ENCODE measurements at regions of chr5 and their contacts with region 1.

Region 1: GRCh38 chr5:80255732-80256479 is at the start of gene SERINC5:
- DNase-seq: peak; percentile 60 to 71
- ATAC-seq: peak; percentile 79 to 81
- H3K4me3 ChIP-seq: peak within 1 kb of the TSS; percentile 76 to 95 (median 82)
- H3K27ac ChIP-seq: peak within 1 kb of the TSS; percentile 87 to 94 (median 91)
- H3K4me1 ChIP-seq: peaks cover 9 to 15% of the 10 kb centered on the region in 2 donors
- H3K27me3 ChIP-seq: no peaks in the 10 kb centered on the region
- CTCF ChIP-seq: no peak
- POLR2A ChIP-seq: peak; percentile 87
- total RNA-seq, gene SERINC5: 1.4 to 5.3 (median 3.0) TPM

Region 2: DNA sequence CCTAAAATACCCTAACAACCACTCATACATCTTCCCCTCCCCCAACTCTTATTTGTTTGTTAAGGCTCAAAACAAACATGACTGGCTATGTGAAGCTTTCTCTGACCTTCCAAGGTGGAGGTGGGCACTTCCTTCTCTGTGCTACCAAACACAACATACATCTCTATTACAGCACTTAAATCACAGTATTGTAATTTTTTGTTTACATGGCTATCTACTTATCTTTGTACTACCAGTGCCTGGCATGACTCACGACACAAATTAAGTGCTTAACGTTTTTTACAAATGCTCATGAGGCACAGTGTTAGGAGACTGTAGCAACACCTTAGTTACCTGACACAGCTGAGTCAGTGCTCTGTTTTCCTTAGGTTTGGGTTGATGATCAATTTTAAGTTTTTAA is 760.6 kb before region 1 on chr5:
- in situ Hi-C with region 1: no loop called
- intact Hi-C with region 1: loop called (anchors 10 kb)
- DNase-seq: no peak
- ATAC-seq: peak; percentile 32 to 49
- H3K4me3 ChIP-seq: no peak overlapping the region
- H3K27ac ChIP-seq: peak overlapping the region; percentile 47 to 74 (median 66)
- H3K4me1 ChIP-seq: peaks cover 42 to 53% of the 10 kb centered on the region in 2 donors
- H3K27me3 ChIP-seq: no peaks in the 10 kb centered on the region
- CTCF ChIP-seq: no peak
- POLR2A ChIP-seq: no peak

Region 3: DNA sequence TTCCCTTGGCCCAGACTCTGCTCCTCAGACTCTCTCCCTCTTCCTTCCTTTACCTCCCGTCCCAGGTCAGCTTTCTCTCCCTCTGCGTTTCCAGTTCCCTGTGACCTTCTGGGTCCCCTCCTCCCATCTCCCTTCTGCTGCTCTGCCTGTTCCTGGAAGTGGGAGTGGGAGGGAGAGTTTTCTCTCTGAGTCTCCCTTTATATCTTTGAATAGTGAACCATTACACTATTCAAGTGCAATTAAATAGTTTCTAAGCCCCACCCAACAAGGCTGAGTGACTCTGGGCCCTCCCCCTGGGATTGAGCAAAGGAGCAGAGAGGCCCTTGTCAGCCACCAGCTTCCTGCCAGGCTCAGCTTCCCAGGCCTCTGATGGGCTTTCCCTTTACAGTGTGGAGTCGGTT is 186.0 kb before region 1 on chr5:
- in situ Hi-C with region 1: no loop called
- intact Hi-C with region 1: no loop called
- DNase-seq: no peak
- ATAC-seq: no peak
- H3K4me3 ChIP-seq: no peak overlapping the region
- H3K27ac ChIP-seq: peak overlapping the region; percentile 2 to 48 (median 28)
- H3K4me1 ChIP-seq: no peaks in the 10 kb centered on the region
- H3K27me3 ChIP-seq: no peaks in the 10 kb centered on the region
- CTCF ChIP-seq: no peak
- POLR2A ChIP-seq: no peak

Region 4: DNA sequence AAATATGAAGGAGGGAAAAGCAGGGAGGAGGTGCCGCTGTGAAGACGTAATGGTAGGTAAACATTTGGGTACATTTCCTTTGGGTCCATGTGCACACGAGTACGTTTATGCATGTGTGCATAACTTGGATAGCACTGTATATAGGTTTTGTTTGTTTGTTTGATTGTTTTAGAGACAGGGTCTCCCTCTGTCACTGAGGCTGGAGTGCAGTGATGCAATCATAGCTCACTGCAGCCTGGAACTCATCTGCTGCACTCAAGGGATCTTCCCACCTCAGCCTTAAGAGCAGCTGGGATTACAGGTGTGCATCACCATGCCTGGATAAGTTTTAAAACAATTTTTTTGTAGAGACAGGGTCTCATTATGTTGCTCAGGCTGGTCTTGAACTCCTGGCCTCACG is 126.8 kb before region 1 on chr5:
- in situ Hi-C with region 1: no loop called
- intact Hi-C with region 1: no loop called
- DNase-seq: no peak
- ATAC-seq: no peak
- H3K4me3 ChIP-seq: no peak overlapping the region
- H3K27ac ChIP-seq: no peak overlapping the region
- H3K4me1 ChIP-seq: no peaks in the 10 kb centered on the region
- H3K27me3 ChIP-seq: no peaks in the 10 kb centered on the region
- CTCF ChIP-seq: no peak
- POLR2A ChIP-seq: no peak

Region 5: DNA sequence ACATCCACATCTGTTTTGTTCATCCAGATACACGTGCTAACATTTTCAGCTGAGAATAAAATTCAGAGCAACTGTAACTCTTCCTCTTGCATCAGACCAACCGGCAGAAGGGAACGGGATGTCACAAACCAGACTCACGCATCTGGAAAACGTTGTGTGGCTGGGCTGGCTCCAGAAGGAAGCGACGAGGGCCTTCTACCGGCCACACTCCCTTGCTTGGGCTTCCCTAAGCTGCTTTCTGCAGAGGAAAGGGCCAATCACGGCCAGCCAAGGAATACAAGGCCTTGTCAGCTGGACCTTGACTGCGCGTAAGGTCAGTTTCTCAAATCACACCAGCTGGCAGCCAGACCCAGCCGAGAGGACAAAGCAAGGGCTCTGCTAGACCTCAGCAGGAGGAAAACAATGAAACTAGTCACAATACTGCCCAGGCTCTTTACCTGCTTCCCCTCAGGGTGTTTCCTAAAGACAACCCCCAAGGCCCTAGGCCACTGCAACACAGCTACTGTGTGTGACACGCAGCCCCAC is 114.7 kb before region 1 on chr5:
- in situ Hi-C with region 1: no loop called
- intact Hi-C with region 1: loop called (anchors 1 kb)
- DNase-seq: peak; percentile 88 to 89
- ATAC-seq: peak; percentile 94 to 95
- H3K4me3 ChIP-seq: no peak overlapping the region
- H3K27ac ChIP-seq: peak overlapping the region; percentile 79 to 86 (median 84)
- H3K4me1 ChIP-seq: peaks cover 17 to 23% of the 10 kb centered on the region in 2 donors
- H3K27me3 ChIP-seq: no peaks in the 10 kb centered on the region
- CTCF ChIP-seq: no peak
- POLR2A ChIP-seq: peak; percentile 35 to 57

Region 6: GRCh38 chr5:80216753-80217596 is 38.9 kb before region 1 on chr5:
- in situ Hi-C with region 1: no loop called
- intact Hi-C with region 1: loop called (anchors 2 kb)
- DNase-seq: peak; percentile 86 to 91
- ATAC-seq: peak; percentile 99
- H3K4me3 ChIP-seq: no peak overlapping the region
- H3K27ac ChIP-seq: peak overlapping the region in 3 of 4 donors; percentile 34 to 64 (median 56)
- H3K4me1 ChIP-seq: peaks cover 15 to 20% of the 10 kb centered on the region in 2 donors
- H3K27me3 ChIP-seq: no peaks in the 10 kb centered on the region
- CTCF ChIP-seq: no peak
- POLR2A ChIP-seq: no peak